ENCODE measurements at regions of chr18 and their contacts with region 1.

Region 1: DNA sequence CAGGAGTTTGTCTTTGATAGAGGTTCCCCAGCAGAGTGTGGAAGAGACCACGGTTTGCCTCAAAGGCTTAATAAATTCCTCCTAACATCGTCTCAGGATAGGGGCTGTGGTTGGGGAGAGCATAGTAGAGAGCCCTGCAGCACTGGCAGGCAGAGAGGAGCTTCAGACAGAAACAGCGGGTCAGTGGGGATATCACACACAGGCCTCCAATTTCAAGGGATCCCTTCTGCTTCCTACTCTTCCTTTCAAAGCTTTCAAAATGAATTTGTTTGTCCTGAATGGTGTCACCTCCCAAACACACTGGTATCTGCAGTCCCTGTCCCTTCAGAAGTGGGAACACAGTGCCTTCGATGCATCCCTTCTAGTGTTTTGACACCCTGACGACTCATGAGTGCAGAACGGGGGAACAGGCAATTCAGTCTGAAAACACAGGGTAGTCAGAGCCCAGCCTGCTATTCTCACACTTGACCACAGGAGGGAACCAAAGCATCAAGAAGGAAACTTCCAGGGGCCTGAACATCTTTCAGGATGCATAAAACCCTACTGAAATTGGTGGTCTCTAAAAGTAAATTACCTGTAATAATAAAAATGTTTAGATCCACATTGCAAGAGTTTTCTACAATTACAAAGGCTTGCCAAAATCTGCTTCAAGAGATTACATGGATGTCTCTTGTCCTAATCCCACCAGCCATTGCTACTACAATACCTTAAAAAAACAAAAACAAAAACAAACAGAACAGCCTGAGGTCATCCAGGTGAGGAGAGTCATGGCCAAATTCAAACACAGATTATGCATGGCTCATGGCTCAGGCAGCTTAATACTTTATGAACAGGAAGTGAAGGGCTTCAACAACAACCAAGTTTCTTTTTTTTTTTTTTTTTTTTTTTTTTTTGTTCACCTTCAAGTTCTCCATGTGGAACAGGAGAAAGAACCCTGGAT is 49.8 kb downstream of the SLC14A2 start:
- DNase-seq: peak; percentile 24 to 66 (median 47)
- H3K4me3 ChIP-seq: no peak overlapping the region
- H3K27ac ChIP-seq: no peak overlapping the region
- H3K4me1 ChIP-seq: no peaks in the 10 kb centered on the region
- H3K27me3 ChIP-seq: no peaks in the 10 kb centered on the region
- CTCF ChIP-seq: peak; percentile 60 to 73 (median 70)
- EP300 ChIP-seq: no peak
- POLR2A ChIP-seq: no peak

Region 2: GRCh38 chr18:45974088-45974536 is 309.0 kb after region 1 on chr18:
- intact Hi-C with region 1: loop called in 2 of 4 experiments (anchors 10 kb)
- DNase-seq: peak in 4 of 5 donors; percentile 29 to 57 (median 44)
- H3K4me3 ChIP-seq: no peak overlapping the region
- H3K27ac ChIP-seq: no peak overlapping the region
- H3K4me1 ChIP-seq: no peaks in the 10 kb centered on the region
- H3K27me3 ChIP-seq: no peaks in the 10 kb centered on the region
- CTCF ChIP-seq: peak; percentile 44 to 67 (median 55)
- EP300 ChIP-seq: no peak
- POLR2A ChIP-seq: no peak

Region 3: DNA sequence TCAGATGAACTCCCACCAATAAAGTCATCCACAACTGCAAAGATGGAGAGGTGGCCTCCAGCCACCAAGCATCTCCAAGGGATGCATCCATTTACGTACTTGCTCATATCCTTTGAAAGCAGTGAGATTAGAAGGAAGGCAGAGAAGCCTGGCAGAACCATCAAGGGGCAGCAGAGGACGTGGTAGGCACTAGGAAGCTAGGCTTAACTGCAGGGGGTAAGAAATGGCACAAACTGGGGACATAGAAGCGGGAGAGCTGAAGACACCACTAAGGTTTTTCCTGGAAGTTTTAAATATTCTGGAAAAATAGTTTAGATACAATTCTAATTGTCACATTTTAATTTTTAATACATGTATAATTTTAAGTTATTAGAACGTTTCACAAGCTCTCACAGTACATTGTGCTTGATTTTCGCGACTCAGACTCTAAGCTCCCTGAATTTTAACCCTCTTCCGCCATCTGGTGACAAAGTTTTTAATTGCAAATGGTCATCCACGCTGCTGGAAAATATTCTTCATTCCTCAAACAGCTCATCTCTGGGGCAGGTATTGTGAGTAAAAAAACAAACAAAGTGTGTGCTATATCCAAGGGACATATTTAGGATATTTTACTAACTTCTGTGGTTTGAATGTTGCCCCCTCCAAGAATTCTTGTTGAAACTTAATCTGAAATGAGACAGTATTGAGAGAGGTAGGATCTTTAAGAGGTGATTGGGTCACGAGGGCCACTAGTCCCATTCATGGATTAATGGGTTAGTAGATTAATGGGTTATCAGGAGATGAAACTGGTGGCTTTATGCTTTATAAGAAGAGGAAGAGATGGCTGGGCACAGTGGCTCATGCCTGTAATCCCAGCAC is 408.6 kb after region 1 on chr18:
- intact Hi-C with region 1: loop called in 2 of 4 experiments (anchors 10 kb)
- DNase-seq: peak in 1 of 5 donors; percentile 56
- H3K4me3 ChIP-seq: no peak overlapping the region
- H3K27ac ChIP-seq: no peak overlapping the region
- H3K4me1 ChIP-seq: peaks cover 9% of the 10 kb centered on the region
- H3K27me3 ChIP-seq: no peaks in the 10 kb centered on the region
- CTCF ChIP-seq: peak in 2 of 3 donors; percentile 57 to 63
- EP300 ChIP-seq: no peak
- POLR2A ChIP-seq: no peak

Measured in ovary (tissue), 10 donors.